Heart right ventricle (tissue), 16 donors: ENCODE measurements at regions of chr6 and their contacts with region 1.

Region 1: GRCh38 chr6:38639498-38640215 is at the start of gene BTBD9:
- DNase-seq: peak; percentile 84
- ATAC-seq: peak; percentile 90 to 95 (median 94)
- H3K4me3 ChIP-seq: peak within 1 kb of the TSS; percentile 61 to 98 (median 87)
- H3K27ac ChIP-seq: peak within 1 kb of the TSS; percentile 92 to 98 (median 96)
- H3K4me1 ChIP-seq: peaks cover 7 to 47% (median 28%) of the 10 kb centered on the region in 9 donors
- H3K27me3 ChIP-seq: no peaks in the 10 kb centered on the region
- CTCF ChIP-seq: no peak
- total RNA-seq, gene BTBD9: 15.6 to 27.7 (median 19.8) TPM

Region 2: GRCh38 chr6:38570750-38571149 is 68.9 kb before region 1 on chr6:
- intact Hi-C with region 1: no loop called
- DNase-seq: no peak
- ATAC-seq: no peak
- H3K4me3 ChIP-seq: no peak overlapping the region
- H3K27ac ChIP-seq: no peak overlapping the region
- H3K4me1 ChIP-seq: peaks cover 0 to 25% (median 9%) of the 10 kb centered on the region in 9 donors
- H3K27me3 ChIP-seq: no peaks in the 10 kb centered on the region
- CTCF ChIP-seq: peak in 8 of 9 donors; percentile 7 to 58 (median 38)

Region 3: DNA sequence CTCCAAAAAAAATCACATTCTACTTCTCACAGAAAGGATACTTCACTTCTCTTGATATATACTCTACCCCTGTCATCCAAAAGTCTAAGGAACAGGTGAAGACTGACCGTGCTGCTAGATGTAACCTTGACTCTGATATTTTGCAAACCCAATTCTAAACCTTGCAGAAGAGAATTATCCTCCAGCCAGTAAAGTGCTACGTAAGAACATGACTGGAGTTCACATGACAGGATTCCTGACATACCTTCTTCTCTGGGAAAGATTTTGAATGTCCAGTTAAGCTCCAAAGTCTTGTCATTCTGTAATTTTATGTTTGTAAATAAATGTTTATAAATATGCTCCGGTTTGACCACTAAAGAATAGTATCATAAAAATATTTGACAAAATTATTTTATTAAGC is 35.7 kb before region 1 on chr6:
- intact Hi-C with region 1: loop called in 1 of 10 experiments (anchors 5 kb)
- DNase-seq: no peak
- ATAC-seq: peak in 3 of 8 donors; percentile 40 to 56 (median 47)
- H3K4me3 ChIP-seq: no peak overlapping the region
- H3K27ac ChIP-seq: peak overlapping the region in 1 of 10 donors; percentile 33
- H3K4me1 ChIP-seq: peaks cover 0 to 30% (median 19%) of the 10 kb centered on the region in 9 donors
- H3K27me3 ChIP-seq: no peaks in the 10 kb centered on the region
- CTCF ChIP-seq: no peak

Region 4: GRCh38 chr6:38702558-38703397 is 63.1 kb after region 1 on chr6 and contains the start of gene GLO1:
- intact Hi-C with region 1: loop called in 1 of 10 experiments (anchors 5 kb)
- DNase-seq: peak; percentile 96 to 98
- ATAC-seq: peak; percentile 100
- H3K4me3 ChIP-seq: peak within 1 kb of the TSS; percentile 47 to 84 (median 73)
- H3K27ac ChIP-seq: peak within 1 kb of the TSS; percentile 67 to 95 (median 88)
- H3K4me1 ChIP-seq: peaks cover 0 to 11% (median 5%) of the 10 kb centered on the region in 9 donors
- H3K27me3 ChIP-seq: peaks cover 0 to 6% (median 0%) of the 10 kb centered on the region in 7 donors
- CTCF ChIP-seq: no peak
- total RNA-seq, gene GLO1: 75.1 to 96.1 (median 82.7) TPM